Endothelial cell of umbilical vein (primary cell): ENCODE measurements at regions of chr9 and their contacts with region 1.

Region 1: GRCh38 chr9:33867747-33868439 is 50.9 kb downstream of the UBE2R2 start:
- DNase-seq: peak; percentile 31
- H3K4me3 ChIP-seq: no peak overlapping the region
- H3K27ac ChIP-seq: no peak overlapping the region
- H3K4me1 ChIP-seq: peaks cover 12% of the 10 kb centered on the region
- H3K27me3 ChIP-seq: no peaks in the 10 kb centered on the region
- CTCF ChIP-seq: no peak
- POLR2A ChIP-seq: no peak

Region 2: GRCh38 chr9:33800886-33801285 is 67.0 kb before region 1 on chr9:
- CTCF ChIA-PET with region 1: no interaction called
- POLR2A ChIA-PET with region 1: no interaction called
- dilution Hi-C with region 1: no loop called
- intact Hi-C with region 1: no loop called
- DNase-seq: peak; percentile 67
- H3K4me3 ChIP-seq: no peak overlapping the region
- H3K27ac ChIP-seq: no peak overlapping the region
- H3K4me1 ChIP-seq: no peaks in the 10 kb centered on the region
- H3K27me3 ChIP-seq: no peaks in the 10 kb centered on the region
- CTCF ChIP-seq: no peak
- POLR2A ChIP-seq: no peak

Region 3: DNA sequence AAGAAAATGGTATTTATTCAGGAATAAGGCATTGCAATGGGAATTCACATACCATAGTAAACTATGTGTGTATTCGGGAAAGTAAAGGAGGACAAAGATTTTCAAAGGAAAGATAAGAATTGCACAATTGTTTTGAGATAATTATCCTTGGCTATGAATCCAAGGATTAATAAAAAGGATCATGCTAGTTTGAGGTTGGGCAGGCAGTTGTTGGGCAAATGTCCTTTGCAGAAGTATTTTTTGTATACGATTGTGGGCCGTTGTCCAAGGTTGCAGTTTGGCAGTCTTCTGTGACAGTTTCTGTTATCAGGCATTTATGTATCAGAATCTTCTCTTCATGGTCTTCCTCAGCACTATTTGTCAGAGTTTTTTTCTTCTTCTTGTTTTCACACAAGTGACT is 191.4 kb after region 1 on chr9:
- CTCF ChIA-PET with region 1: no interaction called
- POLR2A ChIA-PET with region 1: no interaction called
- dilution Hi-C with region 1: no loop called
- intact Hi-C with region 1: no loop called
- DNase-seq: no peak
- H3K4me3 ChIP-seq: no peak overlapping the region
- H3K27ac ChIP-seq: no peak overlapping the region
- H3K4me1 ChIP-seq: no peaks in the 10 kb centered on the region
- H3K27me3 ChIP-seq: no peaks in the 10 kb centered on the region
- CTCF ChIP-seq: no peak
- POLR2A ChIP-seq: no peak

Region 4: GRCh38 chr9:34346873-34347799 is 479.2 kb after region 1 on chr9:
- CTCF ChIA-PET with region 1: no interaction called
- POLR2A ChIA-PET with region 1: no interaction called
- dilution Hi-C with region 1: no loop called
- intact Hi-C with region 1: loop called (anchors 5 kb)
- DNase-seq: no peak
- H3K4me3 ChIP-seq: no peak overlapping the region
- H3K27ac ChIP-seq: no peak overlapping the region
- H3K4me1 ChIP-seq: no peaks in the 10 kb centered on the region
- H3K27me3 ChIP-seq: no peaks in the 10 kb centered on the region
- CTCF ChIP-seq: no peak
- POLR2A ChIP-seq: no peak